Heart left ventricle (tissue), 16 donors: ENCODE measurements at regions of chr6 and their contacts with region 1.

Region 1: GRCh38 chr6:110815217-110816109 is at the start of gene CDK19:
- DNase-seq: peak; percentile 98 to 99 (median 98)
- ATAC-seq: peak; percentile 97 to 98 (median 98)
- H3K4me3 ChIP-seq: peak within 1 kb of the TSS; percentile 52 to 98 (median 94)
- H3K27ac ChIP-seq: peak within 1 kb of the TSS; percentile 83 to 98 (median 94)
- H3K4me1 ChIP-seq: peaks cover 0 to 46% (median 10%) of the 10 kb centered on the region in 12 donors
- H3K27me3 ChIP-seq: no peaks in the 10 kb centered on the region
- CTCF ChIP-seq: no peak
- POLR2A ChIP-seq: peak in 1 of 2 donors; percentile 59
- total RNA-seq, gene CDK19: 5.0 to 16.3 (median 9.2) TPM

Region 2: DNA sequence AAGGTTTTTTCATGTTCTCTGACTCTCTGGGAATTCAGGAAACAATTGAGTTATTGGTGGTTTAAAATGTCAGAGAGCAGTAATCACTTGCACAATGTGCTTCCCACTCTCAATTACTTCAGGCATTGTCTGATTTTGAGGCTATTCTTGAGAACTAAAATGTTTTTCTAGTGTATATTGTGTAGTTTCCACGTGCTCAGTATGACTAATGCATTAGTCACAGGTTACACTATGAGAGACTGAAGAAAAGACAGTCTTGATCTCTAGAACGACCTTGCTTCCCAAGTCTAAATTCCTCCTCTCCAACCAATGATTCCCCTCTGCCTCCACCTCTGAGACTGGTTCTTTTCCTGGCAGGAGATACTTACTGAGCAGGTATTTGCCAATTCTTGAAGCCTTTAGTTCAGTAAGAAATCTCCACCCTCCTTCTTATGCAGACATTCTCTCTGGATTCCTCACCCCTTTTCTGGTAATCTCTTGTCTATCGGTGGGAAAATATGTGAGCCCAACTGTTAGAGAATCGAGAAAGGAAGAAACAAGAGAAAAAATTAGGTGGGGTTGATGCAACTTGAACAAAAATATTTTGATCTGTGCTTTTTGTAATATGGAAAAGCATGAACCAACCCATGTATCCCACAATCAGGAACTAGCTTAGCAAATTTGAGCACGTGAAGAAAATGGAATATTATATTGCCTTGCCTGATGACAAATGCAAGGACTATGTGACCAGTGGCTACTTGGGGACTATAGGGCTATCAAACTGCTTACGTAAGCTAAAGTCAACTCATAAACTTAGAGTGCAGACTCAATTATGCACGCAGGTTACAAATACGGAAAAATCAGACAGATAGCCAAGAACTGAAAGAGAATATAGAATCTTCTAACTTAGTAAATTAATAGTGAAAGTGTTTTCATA is 278.0 kb before region 1 on chr6:
- intact Hi-C with region 1: loop called in 2 of 10 experiments (anchors 10 kb)
- DNase-seq: no peak
- ATAC-seq: peak in 3 of 4 donors; percentile 46 to 69 (median 68)
- H3K4me3 ChIP-seq: no peak overlapping the region
- H3K27ac ChIP-seq: peak overlapping the region in 8 of 12 donors; percentile 1 to 60 (median 38)
- H3K4me1 ChIP-seq: peaks cover 0 to 14% (median 3%) of the 10 kb centered on the region in 12 donors
- H3K27me3 ChIP-seq: no peaks in the 10 kb centered on the region
- CTCF ChIP-seq: no peak
- POLR2A ChIP-seq: no peak

Region 3: GRCh38 chr6:110731898-110732297 is 83.6 kb before region 1 on chr6:
- intact Hi-C with region 1: loop called in 1 of 10 experiments (anchors 2 kb)
- DNase-seq: no peak
- ATAC-seq: no peak
- H3K4me3 ChIP-seq: no peak overlapping the region
- H3K27ac ChIP-seq: no peak overlapping the region
- H3K4me1 ChIP-seq: peaks cover 0 to 5% (median 0%) of the 10 kb centered on the region in 12 donors
- H3K27me3 ChIP-seq: no peaks in the 10 kb centered on the region
- CTCF ChIP-seq: no peak
- POLR2A ChIP-seq: no peak

Region 4: DNA sequence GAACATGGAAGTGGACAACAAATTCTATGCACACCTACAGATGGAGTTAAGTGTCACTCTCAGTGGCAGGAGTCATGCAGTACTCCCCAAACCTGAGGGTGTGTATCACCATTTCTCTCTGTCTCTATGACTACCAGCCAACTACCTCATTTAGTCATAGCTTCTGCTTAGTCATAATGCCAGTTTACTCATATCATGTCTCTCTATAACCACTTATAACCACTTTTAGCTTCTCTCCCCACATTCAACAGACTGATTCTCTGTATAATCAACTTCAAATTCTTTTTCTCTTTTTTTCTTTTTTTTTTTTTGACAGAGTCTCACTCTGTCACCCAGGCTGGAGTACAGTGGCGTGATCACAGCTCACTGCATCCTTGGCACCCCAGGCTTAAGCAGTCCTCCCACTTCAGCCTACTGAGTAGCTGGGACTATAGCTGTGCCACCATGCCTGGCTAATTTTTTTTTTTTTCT is 129.3 kb after region 1 on chr6:
- intact Hi-C with region 1: loop called in 1 of 10 experiments (anchors 5 kb)
- DNase-seq: no peak
- ATAC-seq: peak in 2 of 4 donors; percentile 49 to 55
- H3K4me3 ChIP-seq: no peak overlapping the region
- H3K27ac ChIP-seq: no peak overlapping the region
- H3K4me1 ChIP-seq: peaks cover 0 to 18% (median 0%) of the 10 kb centered on the region in 12 donors
- H3K27me3 ChIP-seq: no peaks in the 10 kb centered on the region
- CTCF ChIP-seq: no peak
- POLR2A ChIP-seq: no peak

Region 5: DNA sequence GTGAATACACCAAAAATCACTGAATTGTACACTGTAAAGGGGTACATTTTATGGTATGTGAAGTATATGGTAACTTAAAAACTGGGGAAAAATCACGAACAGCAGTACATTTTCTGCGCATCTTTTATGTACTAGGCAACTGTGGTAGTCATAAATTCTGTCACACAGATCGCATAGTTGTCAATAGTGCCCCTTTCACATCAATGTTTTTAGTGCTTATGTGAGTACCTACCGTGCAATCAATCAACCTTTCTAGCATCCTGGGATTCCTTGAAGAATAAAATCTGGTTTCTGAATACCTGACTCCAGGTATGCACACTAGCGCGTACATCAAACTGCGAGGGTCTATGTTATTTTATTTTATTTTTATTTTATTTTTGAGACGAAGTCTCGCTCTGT is 165.7 kb after region 1 on chr6:
- intact Hi-C with region 1: loop called in 2 of 10 experiments (anchors 5 to 10 kb)
- DNase-seq: no peak
- ATAC-seq: peak in 2 of 4 donors; percentile 2 to 4
- H3K4me3 ChIP-seq: peak overlapping the region; percentile 49 to 89 (median 78)
- H3K27ac ChIP-seq: peak overlapping the region; percentile 45 to 97 (median 90)
- H3K4me1 ChIP-seq: peaks cover 0 to 21% (median 11%) of the 10 kb centered on the region in 12 donors
- H3K27me3 ChIP-seq: no peaks in the 10 kb centered on the region
- CTCF ChIP-seq: no peak
- POLR2A ChIP-seq: no peak

Region 6: DNA sequence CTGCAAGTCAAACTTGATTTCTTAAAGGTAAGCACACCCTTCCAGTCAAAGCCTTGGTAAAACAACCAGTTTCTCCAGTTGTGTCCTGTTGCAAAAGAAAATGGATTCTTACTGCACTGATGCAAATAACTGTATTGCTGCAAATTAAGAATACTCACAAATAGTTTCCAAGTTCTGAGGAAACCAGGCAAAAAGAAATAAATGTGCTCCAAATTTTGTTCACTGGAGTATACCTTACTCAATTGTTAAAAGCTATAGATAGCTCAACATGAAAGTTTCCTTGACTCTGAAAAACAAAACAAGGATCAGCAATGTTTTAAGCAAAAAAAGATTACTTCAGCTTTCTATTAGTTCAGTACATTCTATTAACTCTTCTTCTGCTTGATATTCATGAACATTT is 347.0 kb after region 1 on chr6:
- intact Hi-C with region 1: no loop called
- DNase-seq: no peak
- ATAC-seq: no peak
- H3K4me3 ChIP-seq: no peak overlapping the region
- H3K27ac ChIP-seq: no peak overlapping the region
- H3K4me1 ChIP-seq: no peaks in the 10 kb centered on the region
- H3K27me3 ChIP-seq: no peaks in the 10 kb centered on the region
- CTCF ChIP-seq: no peak
- POLR2A ChIP-seq: no peak